ENCODE measurements at regions of chr11 and their contacts with region 1.

Region 1: DNA sequence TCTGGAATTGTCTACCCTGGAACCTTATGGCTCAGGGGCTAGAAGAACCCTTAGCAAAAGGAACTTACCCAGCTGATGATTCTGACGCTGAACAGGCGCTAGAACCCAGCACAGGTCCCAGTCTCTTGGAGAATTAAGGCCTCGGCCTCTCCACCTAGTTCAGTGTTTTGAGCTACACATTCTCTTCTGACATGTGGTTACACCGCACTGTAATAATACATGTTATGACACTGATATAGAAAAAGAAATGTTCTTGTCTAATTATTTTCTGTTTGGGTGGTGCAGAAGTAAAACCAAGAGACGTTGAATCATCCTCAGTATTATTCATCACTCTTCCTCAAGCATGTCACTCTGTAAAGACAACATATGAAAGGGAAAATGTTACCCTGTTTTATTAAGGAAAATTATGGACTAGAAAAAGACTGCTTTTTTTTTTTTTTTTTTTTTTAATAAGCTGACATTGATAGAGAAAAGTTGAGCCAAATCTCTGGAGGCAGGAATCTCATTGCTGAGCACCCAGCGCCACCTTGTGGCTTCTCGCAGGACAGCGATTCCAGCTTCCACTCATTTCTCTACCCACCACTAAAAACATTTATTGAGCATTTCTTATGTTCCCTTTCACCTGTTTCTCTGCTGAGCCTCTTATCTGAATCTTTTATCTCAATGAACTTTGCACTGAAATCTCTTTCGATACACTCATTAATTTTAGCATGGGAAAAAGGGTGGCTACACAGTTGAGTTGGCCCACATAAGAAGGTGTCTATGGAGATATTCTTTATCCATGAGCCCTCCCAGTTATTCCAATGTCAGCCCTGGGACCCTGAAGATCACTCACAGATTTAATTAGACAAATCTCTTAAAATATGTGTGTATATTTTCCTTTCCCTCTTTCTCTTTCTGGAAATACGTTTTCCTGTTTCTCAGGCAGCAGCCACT is 12.6 kb upstream of the APLNR start:
- DNase-seq: peak; percentile 72
- H3K4me3 ChIP-seq: no peak overlapping the region
- H3K27ac ChIP-seq: no peak overlapping the region
- H3K4me1 ChIP-seq: no peaks in the 10 kb centered on the region
- H3K27me3 ChIP-seq: peaks cover 3% of the 10 kb centered on the region
- CTCF ChIP-seq: peak; percentile 95

Region 2: DNA sequence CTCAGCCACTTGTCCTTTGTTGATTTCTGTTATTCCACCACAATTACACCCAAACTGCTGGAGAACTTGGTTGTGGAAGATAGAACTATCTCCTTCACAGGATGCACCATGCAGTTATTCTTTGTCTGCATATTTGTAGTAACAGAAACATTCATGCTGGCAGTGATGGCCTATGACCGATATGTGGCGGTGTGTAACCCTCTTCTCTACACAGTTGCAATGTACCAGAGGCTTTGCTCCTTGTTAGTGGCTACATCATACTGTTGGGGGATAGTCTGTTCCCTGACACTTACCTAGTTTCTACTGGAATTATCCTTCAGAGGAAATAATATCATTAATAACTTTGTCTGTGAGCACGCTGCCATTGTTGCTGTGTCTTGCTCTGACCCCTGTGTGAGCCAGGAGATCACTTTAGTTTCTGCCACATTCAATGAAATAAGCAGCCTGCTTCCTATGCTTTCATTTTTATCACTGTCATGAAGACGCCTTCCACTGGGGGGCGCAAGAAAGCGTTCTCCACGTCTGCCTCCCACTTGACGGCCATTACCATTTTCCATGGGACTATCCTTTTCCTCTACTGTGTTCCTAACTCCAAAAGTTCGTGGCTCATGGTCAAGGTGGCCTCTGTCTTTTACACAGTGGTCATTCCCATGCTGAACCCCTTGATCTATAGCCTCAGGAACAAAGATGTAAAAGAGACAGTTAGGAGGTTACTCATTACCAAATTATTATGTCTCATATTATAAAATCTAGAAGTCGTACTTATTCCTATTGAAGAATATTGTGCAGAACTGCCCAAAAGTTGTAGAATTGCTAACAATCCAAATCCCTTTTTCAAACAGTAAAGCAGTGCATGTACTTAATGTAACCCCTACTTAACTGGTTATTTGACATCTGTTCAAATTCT is 1534.4 kb before region 1 on chr11:
- CTCF ChIA-PET with region 1: no interaction called
- POLR2A ChIA-PET with region 1: no interaction called
- intact Hi-C with region 1: loop called (anchors 10 kb)
- DNase-seq: peak; percentile 58
- H3K4me3 ChIP-seq: no peak overlapping the region
- H3K27ac ChIP-seq: no peak overlapping the region
- H3K4me1 ChIP-seq: no peaks in the 10 kb centered on the region
- H3K27me3 ChIP-seq: no peaks in the 10 kb centered on the region
- CTCF ChIP-seq: peak; percentile 76

Region 3: GRCh38 chr11:56027354-56027753 is 1222.3 kb before region 1 on chr11 and contains the start of gene OR5AS1:
- CTCF ChIA-PET with region 1: no interaction called
- POLR2A ChIA-PET with region 1: no interaction called
- intact Hi-C with region 1: no loop called
- DNase-seq: no peak
- H3K4me3 ChIP-seq: no peak within 1 kb of the TSS
- H3K27ac ChIP-seq: no peak within 1 kb of the TSS
- H3K4me1 ChIP-seq: no peaks in the 10 kb centered on the region
- H3K27me3 ChIP-seq: no peaks in the 10 kb centered on the region
- CTCF ChIP-seq: no peak
- total RNA-seq, gene OR5AS1: not detected in 2 replicates

Region 4: GRCh38 chr11:57001674-57002401 is 247.8 kb before region 1 on chr11:
- CTCF ChIA-PET with region 1: no interaction called
- POLR2A ChIA-PET with region 1: no interaction called
- intact Hi-C with region 1: loop called (anchors 1 kb)
- DNase-seq: peak; percentile 5
- H3K4me3 ChIP-seq: no peak overlapping the region
- H3K27ac ChIP-seq: no peak overlapping the region
- H3K4me1 ChIP-seq: no peaks in the 10 kb centered on the region
- H3K27me3 ChIP-seq: no peaks in the 10 kb centered on the region
- CTCF ChIP-seq: peak; percentile 52

Region 5: GRCh38 chr11:57116654-57117053 is 133.0 kb before region 1 on chr11:
- CTCF ChIA-PET with region 1: interaction called, 90 read pairs
- POLR2A ChIA-PET with region 1: interaction called, 6 read pairs
- intact Hi-C with region 1: loop called (anchors 1 kb)
- DNase-seq: peak; percentile 62
- H3K4me3 ChIP-seq: no peak overlapping the region
- H3K27ac ChIP-seq: no peak overlapping the region
- H3K4me1 ChIP-seq: no peaks in the 10 kb centered on the region
- H3K27me3 ChIP-seq: no peaks in the 10 kb centered on the region
- CTCF ChIP-seq: peak; percentile 80

Region 6: DNA sequence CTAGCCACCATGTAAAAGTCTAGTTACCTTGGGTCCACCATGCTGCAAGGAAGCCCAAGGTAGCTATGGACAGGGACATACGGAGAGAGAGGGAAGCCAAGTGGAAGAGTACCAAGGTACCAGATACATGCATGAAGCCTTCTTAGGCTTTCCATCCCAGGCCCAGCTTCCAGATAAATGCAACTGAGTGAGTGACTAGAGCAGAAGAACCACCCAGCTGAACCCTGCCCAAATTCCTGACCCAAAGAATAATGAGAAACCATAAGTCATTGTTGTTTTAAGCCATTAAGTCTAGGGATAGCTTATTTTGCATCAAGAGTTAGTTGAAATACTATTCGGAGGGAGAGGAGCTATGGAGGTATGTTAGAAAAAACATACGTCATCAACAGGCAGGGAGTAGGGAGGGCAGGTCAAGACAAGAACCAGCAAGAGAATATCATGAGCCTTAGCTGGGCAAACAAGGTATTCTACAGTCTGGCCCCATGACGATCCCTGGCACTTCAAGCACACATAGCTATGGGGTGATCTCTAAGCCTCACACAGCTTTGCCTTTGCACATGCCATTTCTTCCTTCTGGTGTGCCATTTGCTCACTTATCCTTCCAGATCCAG is 23.9 kb after region 1 on chr11:
- CTCF ChIA-PET with region 1: interaction called, 18 read pairs
- POLR2A ChIA-PET with region 1: interaction called, 9 read pairs
- intact Hi-C with region 1: no loop called
- DNase-seq: no peak
- H3K4me3 ChIP-seq: no peak overlapping the region
- H3K27ac ChIP-seq: no peak overlapping the region
- H3K4me1 ChIP-seq: peaks cover 11% of the 10 kb centered on the region
- H3K27me3 ChIP-seq: no peaks in the 10 kb centered on the region
- CTCF ChIP-seq: no peak

Measured in A673 (cell line).